OCI-LY7 (cell line): ENCODE measurements at regions of chr9 and their contacts with region 1.

Region 1: DNA sequence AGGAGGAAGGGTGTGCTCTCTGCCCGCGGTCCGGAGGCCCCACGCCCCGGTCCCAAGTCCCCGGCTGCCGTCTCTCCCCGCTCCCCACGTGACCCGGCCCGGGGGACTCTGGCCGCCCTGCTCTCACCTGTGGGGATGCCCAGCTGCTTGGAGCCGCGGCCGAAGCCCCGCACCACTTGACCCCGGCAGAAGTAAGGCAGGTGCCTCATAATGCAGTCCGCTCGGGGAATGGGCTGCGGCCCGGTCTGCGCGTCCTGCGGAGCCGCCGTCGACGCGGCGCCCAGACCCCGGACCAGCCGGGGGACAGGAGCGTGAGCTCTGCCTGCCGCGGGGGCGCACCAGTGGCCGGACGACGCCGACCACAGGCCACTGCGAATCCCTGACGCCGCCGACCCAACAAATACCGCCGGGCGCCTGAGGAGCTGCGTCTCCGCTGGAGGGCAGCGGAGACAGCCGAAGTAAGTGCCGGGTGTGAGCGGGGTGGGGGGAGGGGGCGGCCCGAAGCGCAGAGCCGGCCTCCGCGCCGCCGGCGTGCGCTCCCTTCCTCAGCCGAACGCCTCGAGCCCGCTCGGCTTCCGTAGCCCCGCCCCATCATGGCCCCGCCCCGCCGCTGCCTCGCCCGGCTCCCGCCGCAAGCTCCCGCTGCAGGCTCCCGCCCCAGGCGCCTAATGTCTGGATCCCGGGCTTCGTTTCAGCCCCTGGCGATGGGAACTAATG is at the start of gene RFK:
- DNase-seq: peak; percentile 93
- H3K4me3 ChIP-seq: peak within 1 kb of the TSS; percentile 82
- H3K27ac ChIP-seq: peak within 1 kb of the TSS; percentile 77
- H3K4me1 ChIP-seq: peaks cover 24% of the 10 kb centered on the region
- CTCF ChIP-seq: peak; percentile 71
- total RNA-seq, gene RFK: 25.4 and 37.8 TPM in 2 replicates

Region 2: DNA sequence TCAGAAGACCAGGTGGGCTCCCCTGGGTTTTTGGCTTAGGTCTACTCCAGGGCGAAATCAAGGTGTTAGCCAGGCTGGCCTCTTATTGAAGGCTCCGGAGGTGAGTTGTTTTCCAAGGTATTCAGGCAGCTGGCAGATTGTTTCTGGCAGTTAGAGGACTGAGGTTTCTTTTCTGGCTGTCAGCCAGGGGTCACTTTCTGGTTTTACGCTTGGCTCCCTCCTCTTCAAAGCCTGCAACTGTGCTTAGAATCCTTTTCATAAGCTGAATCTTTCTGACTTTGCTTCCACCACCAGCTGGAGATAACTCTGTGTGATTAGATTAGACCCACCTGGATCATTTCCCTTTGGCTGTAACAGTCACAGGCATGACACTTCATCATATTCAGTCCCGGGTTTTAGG is 24.5 kb before region 1 on chr9:
- CTCF ChIA-PET with region 1: interaction called, 6 read pairs
- POLR2A ChIA-PET with region 1: interaction called, 74 read pairs
- intact Hi-C with region 1: loop called (anchors 1 kb)
- DNase-seq: peak; percentile 86
- H3K4me3 ChIP-seq: peak overlapping the region; percentile 19
- H3K27ac ChIP-seq: peak overlapping the region; percentile 88
- H3K4me1 ChIP-seq: peaks cover 63% of the 10 kb centered on the region
- CTCF ChIP-seq: no peak

Region 3: GRCh38 chr9:76374702-76375559 is 19.2 kb before region 1 on chr9:
- CTCF ChIA-PET with region 1: interaction called, 6 read pairs
- POLR2A ChIA-PET with region 1: interaction called, 74 read pairs
- intact Hi-C with region 1: no loop called
- DNase-seq: no peak
- H3K4me3 ChIP-seq: no peak overlapping the region
- H3K27ac ChIP-seq: no peak overlapping the region
- H3K4me1 ChIP-seq: peaks cover 40% of the 10 kb centered on the region
- CTCF ChIP-seq: no peak

Region 4: GRCh38 chr9:76445976-76446375 is 51.9 kb after region 1 on chr9:
- CTCF ChIA-PET with region 1: no interaction called
- POLR2A ChIA-PET with region 1: interaction called, 3 read pairs
- intact Hi-C with region 1: loop called (anchors 2 kb)
- DNase-seq: no peak
- H3K4me3 ChIP-seq: no peak overlapping the region
- H3K27ac ChIP-seq: no peak overlapping the region
- H3K4me1 ChIP-seq: peaks cover 4% of the 10 kb centered on the region
- CTCF ChIP-seq: no peak

Region 5: GRCh38 chr9:77177161-77177893 is 783.2 kb after region 1 on chr9 and contains the start of gene VPS13A:
- CTCF ChIA-PET with region 1: no interaction called
- POLR2A ChIA-PET with region 1: no interaction called
- intact Hi-C with region 1: loop called (anchors 5 kb)
- DNase-seq: peak; percentile 93
- H3K4me3 ChIP-seq: peak within 1 kb of the TSS; percentile 86
- H3K27ac ChIP-seq: peak within 1 kb of the TSS; percentile 58
- H3K4me1 ChIP-seq: peaks cover 27% of the 10 kb centered on the region
- CTCF ChIP-seq: peak; percentile 42; the same call in 1 of the 2 replicates
- total RNA-seq, gene VPS13A: 22.8 and 27.0 TPM in 2 replicates